Right ventricle myocardium superior (tissue), 1 donor: ENCODE measurements at regions of chr4 and their contacts with region 1.

Region 1: GRCh38 chr4:168995537-168996295 is 14.3 kb downstream of the CBR4 start:
- DNase-seq: no peak
- ATAC-seq: peak; percentile 70

Region 2: GRCh38 chr4:168923526-168924194 is 72.1 kb before region 1 on chr4:
- intact Hi-C with region 1: loop called (anchors 10 kb)
- DNase-seq: no peak
- ATAC-seq: peak; percentile 40

Region 3: GRCh38 chr4:169566021-169566818 is 570.5 kb after region 1 on chr4:
- intact Hi-C with region 1: loop called (anchors 10 kb)
- DNase-seq: no peak
- ATAC-seq: peak; percentile 84